Calu3 (cell line): ENCODE measurements at regions of chr14 and their contacts with region 1.

Region 1: GRCh38 chr14:54338696-54339317 is 58.0 kb upstream of the CDKN3 start:
- DNase-seq: peak; percentile 12
- H3K4me3 Mint-ChIP-seq: no peak overlapping the region
- H3K27ac Mint-ChIP-seq: no peak overlapping the region
- H3K4me1 Mint-ChIP-seq: peaks cover 10% of the 10 kb centered on the region
- H3K27me3 Mint-ChIP-seq: no peaks in the 10 kb centered on the region
- CTCF ChIP-seq: peak; percentile 31

Region 2: DNA sequence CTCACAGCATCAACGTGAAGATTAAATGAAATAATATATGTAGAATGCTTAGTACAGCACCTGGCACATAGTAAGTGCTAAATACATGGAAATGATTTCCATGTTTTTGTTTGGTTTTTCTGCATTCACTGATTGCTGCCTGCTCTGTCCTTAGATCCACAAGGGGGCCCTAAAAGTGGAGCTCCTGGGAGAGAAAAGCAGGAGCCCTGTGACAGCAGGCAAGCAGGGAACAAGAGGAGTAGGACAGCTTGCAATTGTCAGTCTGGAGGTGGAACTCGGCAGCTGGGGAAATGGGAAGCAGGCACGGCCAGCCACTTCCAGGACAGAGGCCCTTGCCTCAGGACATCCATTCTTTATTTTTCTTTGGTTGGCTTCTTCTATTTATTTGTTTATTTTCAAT is 675.1 kb before region 1 on chr14:
- CTCF ChIA-PET with region 1: interaction called, 4 read pairs
- intact Hi-C with region 1: loop called (anchors 10 kb)
- DNase-seq: peak; percentile 28
- H3K4me3 Mint-ChIP-seq: no peak overlapping the region
- H3K27ac Mint-ChIP-seq: no peak overlapping the region
- H3K4me1 Mint-ChIP-seq: no peaks in the 10 kb centered on the region
- H3K27me3 Mint-ChIP-seq: no peaks in the 10 kb centered on the region
- CTCF ChIP-seq: no peak

Region 3: DNA sequence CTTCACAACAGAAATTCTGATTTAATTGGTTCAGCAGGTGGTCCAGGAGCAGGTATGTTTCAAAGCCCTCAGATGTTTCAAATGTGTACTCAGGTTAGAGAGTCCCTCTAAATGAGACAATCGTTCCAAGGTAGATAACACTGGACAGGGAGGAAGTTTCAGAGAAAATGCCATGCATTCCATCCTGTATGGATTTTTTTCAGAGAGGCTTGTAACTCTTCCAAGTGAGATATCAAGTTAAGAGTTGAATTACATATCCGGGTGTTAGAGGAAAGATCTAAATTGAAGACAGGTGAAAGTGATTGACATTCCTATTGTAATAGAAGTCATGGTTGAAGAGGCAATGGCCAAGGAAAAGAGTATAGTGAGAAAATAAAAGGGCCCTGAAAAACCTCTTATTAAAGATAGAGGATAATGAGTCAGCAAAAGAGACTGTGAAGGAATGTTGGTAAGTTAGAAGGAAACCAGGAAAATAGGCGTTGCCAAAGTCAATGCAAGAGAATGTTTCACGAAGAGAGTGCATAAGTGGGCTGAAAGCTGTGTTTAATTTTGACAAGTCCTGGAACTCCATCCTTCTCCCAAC is 488.0 kb before region 1 on chr14:
- CTCF ChIA-PET with region 1: no interaction called
- intact Hi-C with region 1: loop called (anchors 10 kb)
- DNase-seq: no peak
- H3K4me3 Mint-ChIP-seq: peak overlapping the region; percentile 67
- H3K27ac Mint-ChIP-seq: peak overlapping the region; percentile 96
- H3K4me1 Mint-ChIP-seq: peaks cover 62% of the 10 kb centered on the region
- H3K27me3 Mint-ChIP-seq: no peaks in the 10 kb centered on the region
- CTCF ChIP-seq: no peak

Region 4: DNA sequence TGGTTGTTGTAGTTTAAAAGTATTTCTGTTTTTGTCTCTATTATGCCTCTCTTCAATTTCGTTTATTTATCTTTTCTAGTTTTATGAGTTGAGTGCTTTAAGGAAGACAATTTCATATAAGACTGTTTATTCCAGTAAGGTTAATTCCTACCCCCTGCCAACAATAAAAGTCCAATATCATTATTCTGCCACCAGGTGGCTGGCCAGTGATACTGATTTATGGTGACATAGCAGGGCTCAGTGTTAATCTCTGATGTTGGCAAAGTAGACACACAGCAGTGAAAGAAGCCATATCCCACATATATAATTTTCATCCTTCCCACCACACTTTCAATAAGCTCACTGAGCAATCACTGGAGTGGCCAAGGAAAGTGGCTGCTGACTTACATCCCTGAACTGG is 313.1 kb before region 1 on chr14:
- CTCF ChIA-PET with region 1: no interaction called
- intact Hi-C with region 1: loop called (anchors 1 kb)
- DNase-seq: peak; percentile 44
- H3K4me3 Mint-ChIP-seq: no peak overlapping the region
- H3K27ac Mint-ChIP-seq: no peak overlapping the region
- H3K4me1 Mint-ChIP-seq: no peaks in the 10 kb centered on the region
- H3K27me3 Mint-ChIP-seq: no peaks in the 10 kb centered on the region
- CTCF ChIP-seq: peak; percentile 49